PC-9 (cell line): ENCODE measurements at regions of chr1 and their contacts with region 1.

Region 1: GRCh38 chr1:180515864-180516388 is 13.5 kb upstream of the ACBD6 start:
- DNase-seq: peak; percentile 43 to 54
- H3K4me3 ChIP-seq: no peak overlapping the region
- H3K27ac ChIP-seq: no peak overlapping the region
- H3K4me1 ChIP-seq: no peaks in the 10 kb centered on the region
- H3K27me3 ChIP-seq: no peaks in the 10 kb centered on the region
- CTCF ChIP-seq: peak; percentile 86

Region 2: DNA sequence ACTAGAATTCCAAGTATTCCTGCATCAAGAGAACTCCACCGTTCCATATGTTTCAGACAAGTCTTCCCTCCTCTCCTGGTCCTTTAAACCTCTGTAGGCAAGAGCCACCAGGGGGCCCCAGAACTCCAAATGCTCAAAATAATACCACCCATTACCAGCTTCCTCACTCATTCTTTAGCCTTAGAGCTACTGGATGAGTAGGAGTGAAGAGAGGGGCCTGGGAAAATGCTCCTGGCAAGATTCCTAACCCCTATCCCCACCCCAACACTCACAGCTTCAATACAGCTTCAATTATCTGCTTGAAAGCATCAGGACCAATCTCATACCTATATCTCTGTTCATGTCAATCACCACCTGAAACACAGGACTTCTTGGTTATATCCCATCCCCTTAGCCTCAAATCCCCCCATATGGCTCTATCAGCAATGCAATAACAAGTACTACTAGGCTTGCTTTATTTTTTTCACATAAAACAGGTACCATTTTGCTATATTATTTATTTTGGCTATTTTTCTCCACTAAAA is 648.1 kb before region 1 on chr1:
- CTCF ChIA-PET with region 1: no interaction called
- POLR2A ChIA-PET with region 1: no interaction called
- intact Hi-C with region 1: no loop called
- DNase-seq: peak in 1 of 2 experiments; percentile 24
- H3K4me3 ChIP-seq: no peak overlapping the region
- H3K27ac ChIP-seq: no peak overlapping the region
- H3K4me1 ChIP-seq: no peaks in the 10 kb centered on the region
- H3K27me3 ChIP-seq: no peaks in the 10 kb centered on the region
- CTCF ChIP-seq: peak; percentile 78

Region 3: DNA sequence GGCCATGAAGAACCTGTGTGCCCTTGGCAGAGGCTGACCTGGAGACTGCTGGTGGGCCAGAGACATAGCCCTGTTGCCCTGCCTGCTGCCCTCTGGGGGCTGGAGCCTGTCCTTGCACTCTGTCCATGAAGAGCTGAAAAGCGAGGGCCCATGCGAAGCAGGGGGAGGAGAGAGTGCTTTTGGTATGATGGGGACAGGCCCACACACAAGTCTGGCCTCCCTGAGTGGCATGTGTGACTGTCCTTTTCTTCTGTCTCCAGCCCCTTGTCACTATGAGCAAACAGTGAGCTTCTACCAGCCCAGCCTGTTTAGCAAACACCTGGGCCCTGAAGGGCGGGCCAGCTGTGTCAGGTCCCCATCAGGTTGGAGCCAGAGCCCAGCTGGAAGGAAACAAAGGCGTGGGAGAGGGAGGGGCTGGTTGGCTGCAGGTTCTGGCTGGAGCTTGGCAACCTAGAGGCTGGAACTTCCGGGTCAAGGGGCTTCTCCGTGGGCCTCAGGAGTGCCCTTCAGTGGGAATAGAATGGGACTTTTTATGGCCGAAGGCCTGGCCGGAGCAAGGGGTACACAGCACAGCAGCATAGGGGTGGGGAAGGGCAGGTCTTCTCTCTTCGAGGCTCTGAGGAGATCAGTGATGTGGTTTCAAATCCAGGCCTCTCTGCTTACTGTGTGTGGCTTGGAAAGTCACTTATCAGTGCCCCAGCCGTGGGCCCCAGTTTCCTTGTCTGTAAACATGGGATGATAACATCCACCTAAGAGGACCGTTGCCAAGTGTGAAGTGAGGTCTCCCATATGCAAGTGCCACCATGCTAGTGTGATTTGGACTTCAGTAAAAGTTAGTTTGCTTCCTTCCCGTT is 346.9 kb before region 1 on chr1:
- CTCF ChIA-PET with region 1: no interaction called
- POLR2A ChIA-PET with region 1: no interaction called
- intact Hi-C with region 1: no loop called
- DNase-seq: peak; percentile 53 to 68
- H3K4me3 ChIP-seq: no peak overlapping the region; the same call in 1 of the 2 replicates
- H3K27ac ChIP-seq: peak overlapping the region; percentile 73
- H3K4me1 ChIP-seq: peaks cover 69% of the 10 kb centered on the region
- H3K27me3 ChIP-seq: no peaks in the 10 kb centered on the region
- CTCF ChIP-seq: peak; percentile 67

Region 4: DNA sequence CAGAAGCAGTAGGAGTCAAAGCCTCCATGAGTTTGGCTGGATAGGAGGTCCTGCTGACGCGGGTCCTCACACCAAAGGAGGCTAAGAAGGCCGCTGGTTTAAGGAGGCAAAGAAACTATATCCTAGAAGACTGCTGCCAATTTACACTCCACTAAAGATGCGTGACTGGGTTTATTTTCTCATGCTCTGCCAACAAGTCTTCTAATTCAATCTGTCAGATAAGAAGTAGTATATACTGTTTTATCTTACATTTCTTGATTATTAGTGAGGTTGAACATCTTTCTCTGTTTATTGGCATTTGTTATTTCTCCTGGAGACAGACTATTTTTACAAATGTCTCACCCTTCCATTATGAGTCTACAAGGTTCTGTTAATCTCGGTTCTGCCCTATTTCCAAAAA is 47.6 kb before region 1 on chr1:
- CTCF ChIA-PET with region 1: no interaction called
- POLR2A ChIA-PET with region 1: no interaction called
- intact Hi-C with region 1: no loop called
- DNase-seq: no peak
- H3K4me3 ChIP-seq: no peak overlapping the region
- H3K27ac ChIP-seq: no peak overlapping the region
- H3K4me1 ChIP-seq: no peaks in the 10 kb centered on the region
- H3K27me3 ChIP-seq: no peaks in the 10 kb centered on the region
- CTCF ChIP-seq: no peak

Region 5: GRCh38 chr1:180631766-180632325 is 115.9 kb after region 1 on chr1 and contains the start of gene XPR1:
- CTCF ChIA-PET with region 1: no interaction called
- POLR2A ChIA-PET with region 1: no interaction called
- intact Hi-C with region 1: loop called (anchors 5 kb)
- DNase-seq: peak; percentile 92 to 96
- H3K4me3 ChIP-seq: peak within 1 kb of the TSS; percentile 73
- H3K27ac ChIP-seq: no peak within 1 kb of the TSS
- H3K4me1 ChIP-seq: peaks cover 14% of the 10 kb centered on the region
- H3K27me3 ChIP-seq: no peaks in the 10 kb centered on the region
- CTCF ChIP-seq: no peak
- total RNA-seq, gene XPR1: 10.4 and 16.8 TPM in 2 replicates

Region 6: DNA sequence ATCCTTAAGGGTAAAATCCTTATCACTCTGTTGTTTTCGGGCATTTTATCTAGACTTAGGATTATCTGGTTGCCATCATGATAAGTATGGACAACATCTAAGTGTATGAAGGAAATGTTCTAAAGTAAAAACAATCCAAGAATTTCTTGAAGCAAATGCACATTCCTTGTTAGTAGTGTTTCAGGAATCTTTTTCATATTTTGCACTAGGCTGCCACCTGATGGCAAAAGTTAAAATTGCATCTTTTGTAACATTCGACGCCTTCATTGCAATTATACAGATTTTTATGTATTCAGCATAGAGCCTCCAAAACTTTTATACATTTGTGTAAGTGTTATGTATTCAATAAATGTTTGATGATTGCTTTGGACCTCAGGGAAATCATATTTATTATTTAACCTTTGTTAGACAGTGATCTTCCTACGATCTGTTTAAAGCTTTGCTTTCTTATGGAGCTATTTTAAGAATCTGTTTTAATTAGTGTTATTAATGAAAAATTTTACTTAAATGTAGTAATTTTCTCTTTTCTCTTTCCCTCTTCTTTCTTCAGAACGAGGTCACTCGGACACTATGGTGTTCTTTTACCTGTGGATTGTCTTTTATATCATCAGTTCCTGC is 347.3 kb after region 1 on chr1:
- CTCF ChIA-PET with region 1: interaction called, 16 read pairs
- POLR2A ChIA-PET with region 1: no interaction called
- intact Hi-C with region 1: loop called (anchors 5 kb)
- DNase-seq: peak; percentile 31 to 52
- H3K4me3 ChIP-seq: no peak overlapping the region
- H3K27ac ChIP-seq: no peak overlapping the region
- H3K4me1 ChIP-seq: no peaks in the 10 kb centered on the region
- H3K27me3 ChIP-seq: no peaks in the 10 kb centered on the region
- CTCF ChIP-seq: peak; percentile 91

Region 7: DNA sequence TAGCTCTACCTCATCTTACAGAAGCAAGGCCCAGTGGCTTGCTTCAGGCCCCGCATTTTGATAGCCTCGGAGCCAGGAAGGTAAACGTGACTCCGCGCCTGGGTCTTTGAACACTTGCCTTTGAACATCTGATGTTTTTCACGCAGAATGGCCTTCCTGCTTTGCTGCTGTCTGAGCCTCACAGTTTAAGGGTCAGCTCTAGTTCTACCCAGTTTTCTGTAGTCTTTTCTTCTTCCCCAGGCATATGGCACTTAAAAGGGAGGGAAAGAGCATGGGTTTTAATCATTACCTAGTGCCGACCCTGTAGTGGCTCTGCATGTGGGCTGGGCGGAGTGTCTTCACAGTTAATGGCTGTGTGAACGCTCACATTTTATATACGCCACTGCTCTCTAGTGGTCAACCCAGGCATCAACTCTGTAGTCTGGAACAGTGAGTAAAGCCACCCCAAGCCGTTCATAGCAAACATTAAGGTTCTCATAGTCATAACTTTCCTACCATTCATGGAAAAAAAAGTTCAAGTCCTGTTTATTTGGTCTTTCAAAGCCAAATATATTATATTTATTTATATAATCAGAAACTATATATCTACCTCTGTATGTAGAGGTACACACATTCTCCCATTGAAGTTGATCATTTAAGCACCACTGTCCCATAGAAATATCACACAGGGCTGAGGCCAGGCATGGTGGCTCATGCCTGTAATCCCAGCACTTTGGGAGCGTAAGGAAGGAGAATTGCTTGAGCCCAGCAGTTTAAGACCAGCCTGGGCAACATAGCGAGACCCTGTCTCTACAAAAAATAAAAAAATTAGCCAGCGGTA is 650.7 kb after region 1 on chr1:
- CTCF ChIA-PET with region 1: no interaction called
- POLR2A ChIA-PET with region 1: no interaction called
- intact Hi-C with region 1: loop called (anchors 2 kb)
- DNase-seq: peak; percentile 58 to 62
- H3K4me3 ChIP-seq: no peak overlapping the region
- H3K27ac ChIP-seq: no peak overlapping the region
- H3K4me1 ChIP-seq: no peaks in the 10 kb centered on the region
- H3K27me3 ChIP-seq: no peaks in the 10 kb centered on the region
- CTCF ChIP-seq: peak; percentile 88

Region 8: DNA sequence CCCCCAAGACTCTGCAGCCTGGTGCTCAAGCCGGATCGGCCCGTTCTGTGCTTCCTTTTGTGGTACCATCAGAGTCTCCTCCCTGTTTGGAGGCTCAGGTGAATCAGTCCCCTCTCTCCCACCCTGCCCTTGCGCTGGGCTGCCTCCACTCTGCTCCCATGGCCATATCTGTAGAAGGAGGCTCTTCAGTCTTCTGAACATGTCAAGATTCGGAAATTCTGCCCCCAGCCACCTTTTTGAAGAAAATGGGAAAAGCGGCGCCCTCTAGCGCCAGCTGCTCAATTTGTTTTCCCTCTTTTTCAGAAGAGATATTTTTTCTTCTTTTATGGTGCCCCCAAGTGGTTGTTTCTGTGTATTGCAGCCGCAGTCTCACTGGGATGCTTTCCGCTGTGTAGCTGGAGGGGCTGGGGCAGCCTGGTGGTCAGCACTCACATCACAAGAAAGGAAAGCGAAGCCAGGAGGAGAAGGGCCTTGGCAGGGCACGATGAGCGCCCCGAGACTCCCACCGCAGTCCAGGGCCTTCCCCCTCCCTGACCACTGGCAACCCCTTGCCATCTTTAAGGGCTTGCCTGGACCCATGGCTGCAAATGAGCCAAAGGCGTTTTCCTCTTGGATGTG is 909.0 kb after region 1 on chr1:
- CTCF ChIA-PET with region 1: no interaction called
- POLR2A ChIA-PET with region 1: no interaction called
- intact Hi-C with region 1: loop called (anchors 5 kb)
- DNase-seq: peak; percentile 37 to 60
- H3K4me3 ChIP-seq: no peak overlapping the region
- H3K27ac ChIP-seq: no peak overlapping the region
- H3K4me1 ChIP-seq: no peaks in the 10 kb centered on the region
- H3K27me3 ChIP-seq: peaks cover 15% of the 10 kb centered on the region; the same call in 1 of the 2 replicates
- CTCF ChIP-seq: peak; percentile 98